Activated CD8-positive, alpha-beta T cell treated with anti-CD3 and anti-CD28 coated beads for 36 hours (primary cell): ENCODE measurements at regions of chr5 and their contacts with region 1.

Region 1: DNA sequence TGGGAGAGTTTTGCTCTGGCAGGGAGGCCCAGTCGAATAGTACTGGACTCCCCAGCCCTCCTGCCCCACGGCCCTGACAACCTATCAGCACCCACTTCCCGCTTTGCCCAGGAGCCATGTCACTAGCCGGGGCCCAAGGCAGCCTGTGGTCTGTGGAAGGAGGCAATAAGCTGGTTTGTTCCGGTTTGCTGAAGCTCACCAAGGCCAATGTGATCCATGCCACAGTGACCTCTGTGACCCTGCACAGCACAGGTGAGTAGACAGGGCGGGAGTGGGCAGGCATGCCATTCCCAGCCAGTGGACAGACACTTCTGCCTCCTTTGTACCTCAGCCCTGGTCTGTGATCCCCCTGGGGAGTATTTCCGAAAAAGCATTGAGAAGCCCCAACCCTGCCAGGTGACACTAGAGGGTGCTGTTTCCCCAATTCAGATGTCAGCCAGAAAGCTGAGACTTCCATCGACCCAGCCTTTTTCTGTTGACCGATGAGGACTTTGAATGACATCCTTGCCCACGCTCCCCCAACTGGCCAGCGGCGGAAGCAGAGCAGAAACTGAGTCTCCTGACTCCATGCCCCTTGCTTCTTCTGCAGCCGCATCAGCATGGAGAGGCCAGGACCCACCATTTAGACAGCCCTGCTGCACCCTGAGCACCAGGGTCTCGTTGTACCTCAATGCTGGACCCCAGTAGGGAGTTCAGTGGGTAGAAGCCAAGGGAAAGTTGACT is 9.6 kb downstream of the PCYOX1L start:
- DNase-seq: peak; percentile 73
- ATAC-seq: peak; percentile 70
- H3K4me3 Mint-ChIP-seq: no peak overlapping the region
- H3K27ac Mint-ChIP-seq: no peak overlapping the region
- H3K4me1 Mint-ChIP-seq: peaks cover 5% of the 10 kb centered on the region
- H3K27me3 Mint-ChIP-seq: no peaks in the 10 kb centered on the region
- CTCF ChIP-seq: peak; percentile 74

Region 2: GRCh38 chr5:149310947-149311658 is 56.3 kb before region 1 on chr5:
- CTCF ChIA-PET with region 1: interaction called, 22 read pairs
- POLR2A ChIA-PET with region 1: no interaction called
- intact Hi-C with region 1: loop called (anchors 2 kb)
- DNase-seq: peak; percentile 12
- ATAC-seq: no peak
- H3K4me3 Mint-ChIP-seq: no peak overlapping the region
- H3K27ac Mint-ChIP-seq: no peak overlapping the region
- H3K4me1 Mint-ChIP-seq: no peaks in the 10 kb centered on the region
- H3K27me3 Mint-ChIP-seq: no peaks in the 10 kb centered on the region
- CTCF ChIP-seq: no peak

Region 3: GRCh38 chr5:149333711-149334443 is 33.5 kb before region 1 on chr5:
- CTCF ChIA-PET with region 1: interaction called, 11 read pairs
- POLR2A ChIA-PET with region 1: no interaction called
- intact Hi-C with region 1: no loop called
- DNase-seq: no peak
- ATAC-seq: no peak
- H3K4me3 Mint-ChIP-seq: no peak overlapping the region
- H3K27ac Mint-ChIP-seq: no peak overlapping the region
- H3K4me1 Mint-ChIP-seq: no peaks in the 10 kb centered on the region
- H3K27me3 Mint-ChIP-seq: no peaks in the 10 kb centered on the region
- CTCF ChIP-seq: no peak

Region 4: DNA sequence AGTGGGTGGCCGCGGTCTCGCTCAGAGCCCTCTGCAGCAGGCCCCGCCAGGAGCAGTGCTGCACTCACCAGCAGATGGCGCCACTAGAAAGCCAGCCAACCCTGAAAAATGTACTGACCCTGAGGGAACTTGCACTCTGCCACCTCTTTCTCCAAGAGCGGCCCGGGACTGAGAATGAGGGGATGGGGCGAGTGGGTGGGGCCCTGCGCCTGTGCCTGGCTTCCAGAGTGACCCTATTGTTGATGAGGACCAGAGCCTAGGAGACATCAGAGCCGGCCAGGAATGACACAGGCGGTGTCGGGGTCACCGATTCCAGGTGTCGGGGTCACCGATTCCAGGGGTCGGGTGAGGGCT is 14.6 kb after region 1 on chr5:
- CTCF ChIA-PET with region 1: interaction called, 43 read pairs
- POLR2A ChIA-PET with region 1: no interaction called
- intact Hi-C with region 1: no loop called
- DNase-seq: peak; percentile 80
- ATAC-seq: peak; percentile 93
- H3K4me3 Mint-ChIP-seq: no peak overlapping the region
- H3K27ac Mint-ChIP-seq: no peak overlapping the region
- H3K4me1 Mint-ChIP-seq: peaks cover 4% of the 10 kb centered on the region
- H3K27me3 Mint-ChIP-seq: no peaks in the 10 kb centered on the region
- CTCF ChIP-seq: peak; percentile 80

Region 5: GRCh38 chr5:149561848-149562247 is 194.4 kb after region 1 on chr5:
- CTCF ChIA-PET with region 1: interaction called, 16 read pairs
- POLR2A ChIA-PET with region 1: no interaction called
- intact Hi-C with region 1: no loop called
- DNase-seq: no peak
- ATAC-seq: peak; percentile 81
- H3K4me3 Mint-ChIP-seq: no peak overlapping the region
- H3K27ac Mint-ChIP-seq: peak overlapping the region; percentile 40
- H3K4me1 Mint-ChIP-seq: peaks cover 24% of the 10 kb centered on the region
- H3K27me3 Mint-ChIP-seq: no peaks in the 10 kb centered on the region
- CTCF ChIP-seq: no peak